Breast epithelium (tissue), 4 donors: ENCODE measurements at regions of chr1 and their contacts with region 1.

Region 1: DNA sequence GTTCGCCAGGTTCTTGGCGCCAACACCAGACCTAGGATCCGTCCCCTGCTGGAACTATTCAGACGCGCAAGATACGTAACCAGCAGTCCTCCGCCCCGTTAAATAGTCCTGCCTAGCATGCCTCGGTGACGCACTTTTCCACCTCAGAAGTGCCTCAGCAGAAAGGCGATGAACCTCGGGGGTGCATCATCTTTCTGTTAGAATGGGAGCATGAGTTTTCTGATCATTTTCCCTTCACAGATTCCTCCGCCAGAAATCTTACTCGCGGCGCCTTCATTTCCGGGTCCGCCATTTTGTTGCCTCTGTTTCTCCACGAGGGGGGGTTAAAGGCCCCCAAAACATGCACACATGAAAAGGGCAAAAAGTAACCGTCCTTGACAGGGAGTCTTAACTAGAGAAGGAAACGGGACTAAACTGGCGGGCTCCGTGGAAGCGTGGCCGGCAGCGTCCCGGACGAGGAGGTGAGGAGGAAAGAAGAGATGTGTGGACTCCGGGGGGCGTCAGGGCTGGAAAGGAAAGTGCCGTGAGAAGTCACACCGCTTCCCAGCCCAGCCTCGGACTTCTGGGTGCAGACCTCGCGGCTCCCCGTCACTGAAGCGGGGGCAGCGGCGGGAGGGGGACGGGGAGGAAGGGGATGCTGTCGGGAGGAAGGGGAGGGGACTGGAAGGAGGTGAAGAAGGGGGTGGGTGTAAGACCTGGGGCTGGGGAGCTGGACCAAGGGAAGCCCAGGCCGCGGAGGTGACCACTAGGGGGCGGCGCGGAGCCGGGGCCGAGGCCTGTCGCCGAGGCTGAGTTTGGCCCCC is at the start of gene GABPB2:
- DNase-seq: peak; percentile 89 to 90
- H3K4me3 ChIP-seq: peak within 1 kb of the TSS; percentile 79 to 87 (median 83)
- H3K27ac ChIP-seq: peak within 1 kb of the TSS; percentile 98 to 99
- H3K4me1 ChIP-seq: peaks cover 0 to 3% of the 10 kb centered on the region in 2 donors
- H3K27me3 ChIP-seq: no peaks in the 10 kb centered on the region
- CTCF ChIP-seq: peak; percentile 60 to 89 (median 89)
- POLR2A ChIP-seq: peak; percentile 75
- total RNA-seq, gene GABPB2: 19.5 to 32.0 (median 20.6) TPM

Region 2: GRCh38 chr1:150995896-150996295 is 74.8 kb before region 1 on chr1:
- intact Hi-C with region 1: no loop called
- DNase-seq: no peak
- H3K4me3 ChIP-seq: peak overlapping the region in 2 of 3 donors; percentile 11 to 14
- H3K27ac ChIP-seq: peak overlapping the region; percentile 41 to 76
- H3K4me1 ChIP-seq: no peaks in the 10 kb centered on the region
- H3K27me3 ChIP-seq: no peaks in the 10 kb centered on the region
- CTCF ChIP-seq: peak; percentile 85 to 97 (median 93)
- POLR2A ChIP-seq: no peak

Region 3: DNA sequence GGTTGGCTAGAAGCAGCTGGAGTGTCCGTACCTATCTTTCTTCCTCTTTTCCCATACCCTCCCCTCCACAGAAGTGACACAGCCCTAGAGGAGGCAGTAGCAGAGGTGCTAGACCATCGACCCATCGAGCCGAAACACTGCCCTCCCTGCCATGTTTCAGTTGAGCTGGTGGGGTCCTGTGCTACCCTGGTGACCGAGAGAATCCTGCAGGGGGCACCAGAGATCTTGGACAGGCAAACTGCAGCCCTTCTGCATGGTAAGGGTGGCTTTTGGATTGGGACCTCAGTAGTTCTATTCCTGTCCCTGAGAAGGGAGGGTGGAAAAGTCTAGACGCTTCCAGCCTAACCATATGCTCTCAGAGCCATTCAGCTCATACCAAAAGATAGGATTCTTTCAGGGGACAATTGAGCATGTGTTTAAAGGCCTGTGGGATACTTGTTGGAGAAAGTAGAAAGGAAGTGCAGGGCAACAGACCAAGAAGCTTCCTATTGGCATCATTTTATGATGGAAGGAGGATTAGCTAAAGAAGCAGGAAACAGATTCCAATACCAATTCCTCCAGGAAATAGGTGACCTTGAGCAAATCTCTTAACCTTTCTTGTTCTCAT is 46.0 kb before region 1 on chr1:
- intact Hi-C with region 1: loop called (anchors 10 kb)
- DNase-seq: peak; percentile 61 to 68
- H3K4me3 ChIP-seq: no peak overlapping the region
- H3K27ac ChIP-seq: peak overlapping the region in 1 of 2 donors; percentile 21
- H3K4me1 ChIP-seq: no peaks in the 10 kb centered on the region
- H3K27me3 ChIP-seq: no peaks in the 10 kb centered on the region
- CTCF ChIP-seq: peak; percentile 63 to 76 (median 67)
- POLR2A ChIP-seq: no peak

Region 4: DNA sequence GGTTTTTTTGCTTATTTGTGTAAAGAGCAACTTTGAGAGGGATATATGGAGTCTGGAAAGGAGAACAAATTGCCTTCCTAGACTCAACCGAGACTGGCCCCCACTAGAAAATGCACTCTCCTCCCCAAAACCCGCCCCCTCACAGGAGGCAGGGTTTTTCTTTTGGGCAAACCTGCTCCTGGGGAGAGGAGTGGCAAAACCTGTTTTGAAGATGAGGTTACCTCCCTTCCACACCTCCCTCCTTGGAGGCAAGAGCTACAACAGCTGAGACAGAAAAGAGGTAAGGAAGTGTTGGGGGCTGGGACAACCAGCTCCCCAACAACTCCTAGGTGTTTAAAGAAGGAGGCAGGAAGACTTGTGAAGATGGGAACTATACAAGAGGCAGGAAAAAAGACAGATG is 34.3 kb before region 1 on chr1 and contains the start of gene BNIPL:
- intact Hi-C with region 1: no loop called
- DNase-seq: no peak
- H3K4me3 ChIP-seq: peak within 1 kb of the TSS in 2 of 3 donors; percentile 30 to 31
- H3K27ac ChIP-seq: peak within 1 kb of the TSS; percentile 42 to 44
- H3K4me1 ChIP-seq: no peaks in the 10 kb centered on the region
- H3K27me3 ChIP-seq: no peaks in the 10 kb centered on the region
- CTCF ChIP-seq: no peak
- POLR2A ChIP-seq: no peak
- total RNA-seq, gene BNIPL: 0.16 to 47.1 (median 17.0) TPM

Region 5: GRCh38 chr1:151098126-151098525 is 27.5 kb after region 1 on chr1:
- intact Hi-C with region 1: no loop called
- DNase-seq: no peak
- H3K4me3 ChIP-seq: no peak overlapping the region
- H3K27ac ChIP-seq: no peak overlapping the region
- H3K4me1 ChIP-seq: no peaks in the 10 kb centered on the region
- H3K27me3 ChIP-seq: no peaks in the 10 kb centered on the region
- CTCF ChIP-seq: no peak
- POLR2A ChIP-seq: no peak

Region 6: GRCh38 chr1:151135457-151136385 is 65.0 kb after region 1 on chr1:
- intact Hi-C with region 1: no loop called
- DNase-seq: no peak
- H3K4me3 ChIP-seq: no peak overlapping the region
- H3K27ac ChIP-seq: no peak overlapping the region
- H3K4me1 ChIP-seq: no peaks in the 10 kb centered on the region
- H3K27me3 ChIP-seq: no peaks in the 10 kb centered on the region
- CTCF ChIP-seq: no peak
- POLR2A ChIP-seq: no peak